Activated CD4-positive, alpha-beta T cell treated with anti-CD3 and anti-CD28 coated beads for 36 hours (primary cell): ENCODE measurements at regions of chr15 and their contacts with region 1.

Region 1: GRCh38 chr15:69719527-69720240 is 267.1 kb downstream of the RPLP1 start:
- DNase-seq: peak; percentile 76
- ATAC-seq: peak; percentile 89
- H3K4me3 Mint-ChIP-seq: no peak overlapping the region
- H3K27ac Mint-ChIP-seq: peak overlapping the region; percentile 28
- H3K4me1 Mint-ChIP-seq: peaks cover 84% of the 10 kb centered on the region
- H3K27me3 Mint-ChIP-seq: peaks cover 4% of the 10 kb centered on the region

Region 2: DNA sequence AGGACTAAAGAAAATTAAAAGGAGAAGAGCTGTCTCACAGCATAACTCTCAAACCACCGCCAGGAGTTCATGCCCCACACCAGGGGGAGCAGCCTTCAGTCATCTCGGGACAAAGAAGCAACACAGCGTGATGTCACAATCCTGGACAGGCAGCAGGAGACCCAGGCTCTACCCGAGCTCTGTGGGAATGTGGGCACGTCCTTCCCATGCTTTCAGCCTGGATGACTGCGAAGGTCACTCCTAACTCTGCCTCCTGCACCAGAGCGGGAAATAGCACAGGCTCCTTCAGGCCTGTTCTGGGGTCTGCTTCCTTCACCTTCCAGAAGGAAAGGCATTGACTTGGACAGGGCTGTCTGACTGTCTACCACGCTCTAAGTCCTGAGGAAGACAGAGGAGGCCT is 673.9 kb before region 1 on chr15:
- CTCF ChIA-PET with region 1: no interaction called
- POLR2A ChIA-PET with region 1: no interaction called
- intact Hi-C with region 1: no loop called
- DNase-seq: no peak
- ATAC-seq: no peak
- H3K4me3 Mint-ChIP-seq: no peak overlapping the region
- H3K27ac Mint-ChIP-seq: no peak overlapping the region
- H3K4me1 Mint-ChIP-seq: no peaks in the 10 kb centered on the region
- H3K27me3 Mint-ChIP-seq: peaks cover 2% of the 10 kb centered on the region

Region 3: GRCh38 chr15:69323966-69324365 is 395.7 kb before region 1 on chr15:
- CTCF ChIA-PET with region 1: no interaction called
- POLR2A ChIA-PET with region 1: no interaction called
- intact Hi-C with region 1: loop called in 1 of 2 experiments (anchors 5 kb)
- DNase-seq: no peak
- ATAC-seq: no peak
- H3K4me3 Mint-ChIP-seq: no peak overlapping the region
- H3K27ac Mint-ChIP-seq: no peak overlapping the region
- H3K4me1 Mint-ChIP-seq: peaks cover 22% of the 10 kb centered on the region
- H3K27me3 Mint-ChIP-seq: peaks cover 18% of the 10 kb centered on the region

Region 4: GRCh38 chr15:69673291-69673881 is 46.3 kb before region 1 on chr15:
- CTCF ChIA-PET with region 1: no interaction called
- POLR2A ChIA-PET with region 1: no interaction called
- intact Hi-C with region 1: no loop called
- DNase-seq: no peak
- ATAC-seq: no peak
- H3K4me3 Mint-ChIP-seq: no peak overlapping the region
- H3K27ac Mint-ChIP-seq: no peak overlapping the region
- H3K4me1 Mint-ChIP-seq: peaks cover 16% of the 10 kb centered on the region
- H3K27me3 Mint-ChIP-seq: peaks cover 10% of the 10 kb centered on the region

Region 5: DNA sequence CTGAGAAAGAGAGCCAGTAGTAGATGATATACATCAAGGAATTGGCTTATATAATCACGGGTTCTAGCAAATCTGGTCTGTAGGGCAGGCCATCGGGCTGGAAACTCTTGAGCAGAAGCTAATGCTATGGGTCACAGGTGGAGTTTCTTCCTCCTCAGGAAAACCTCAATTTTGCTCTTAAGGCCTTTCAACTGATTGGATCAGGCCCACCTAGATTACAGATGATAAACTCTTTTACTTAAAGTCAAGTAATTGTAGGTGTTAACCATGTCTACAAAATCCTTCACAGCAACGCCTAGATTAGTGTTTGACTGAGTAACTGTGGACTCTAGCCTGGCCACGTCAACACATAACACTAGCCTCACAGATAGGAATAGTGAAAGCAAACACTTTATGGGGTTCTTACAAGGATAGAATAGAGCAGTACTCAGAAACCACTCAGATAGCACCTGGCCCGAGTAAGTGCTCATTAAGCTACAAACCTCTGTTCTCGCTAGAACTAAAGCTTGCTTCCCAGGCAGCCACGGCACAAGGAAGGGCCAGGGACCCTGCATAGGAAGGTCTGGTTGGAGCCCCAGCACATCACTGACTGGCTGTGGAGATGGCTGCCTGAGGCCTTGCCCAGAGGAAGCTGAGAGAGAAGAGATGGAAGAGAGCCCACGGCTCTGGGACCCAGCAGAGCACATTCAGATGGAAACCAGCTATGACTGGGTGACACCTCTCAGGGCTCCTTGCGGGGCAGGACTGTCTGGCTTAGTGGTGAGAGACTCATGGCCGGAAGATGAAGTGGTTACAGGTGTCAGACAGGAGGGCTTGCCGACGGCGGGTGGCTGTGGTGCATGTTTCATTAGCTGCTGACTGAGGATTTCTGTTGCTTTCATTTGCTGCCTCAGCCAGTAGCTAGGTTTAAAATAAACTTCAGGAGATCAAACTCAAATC is 580.5 kb after region 1 on chr15:
- CTCF ChIA-PET with region 1: no interaction called
- POLR2A ChIA-PET with region 1: no interaction called
- intact Hi-C with region 1: loop called (anchors 5 to 10 kb)
- DNase-seq: peak; percentile 89
- ATAC-seq: peak; percentile 100
- H3K4me3 Mint-ChIP-seq: no peak overlapping the region
- H3K27ac Mint-ChIP-seq: no peak overlapping the region
- H3K4me1 Mint-ChIP-seq: peaks cover 11% of the 10 kb centered on the region
- H3K27me3 Mint-ChIP-seq: no peaks in the 10 kb centered on the region